H1 (cell line): ENCODE measurements at regions of chr15 and their contacts with region 1.

Region 1: GRCh38 chr15:62584301-62585235 is 419.5 kb upstream of the C2CD4B start:
- DNase-seq: no peak
- H3K4me3 ChIP-seq: peak overlapping the region in 1 of 4 experiments; percentile 6; a peak in 1 of 8 replicates
- H3K27ac ChIP-seq: no peak overlapping the region
- H3K4me1 ChIP-seq: peaks cover 0 to 9% (median 0%) of the 10 kb centered on the region in 4 experiments; a peak in 2 of 7 replicates
- H3K27me3 ChIP-seq: peaks cover 0 to 1% (median 0%) of the 10 kb centered on the region in 4 experiments; a peak in 1 of 7 replicates
- CTCF ChIP-seq: no peak
- EP300 ChIP-seq: no peak
- POLR2A ChIP-seq: no peak
- RAD21 ChIP-seq: no peak

Region 2: GRCh38 chr15:62569460-62570412 is 14.8 kb before region 1 on chr15:
- CTCF ChIA-PET with region 1: interaction called, 25 read pairs
- POLR2A ChIA-PET with region 1: interaction called, 4 read pairs
- DNase-seq: no peak
- H3K4me3 ChIP-seq: no peak overlapping the region
- H3K27ac ChIP-seq: no peak overlapping the region
- H3K4me1 ChIP-seq: peaks cover 0 to 3% (median 1%) of the 10 kb centered on the region in 4 experiments; a peak in 2 of 7 replicates
- H3K27me3 ChIP-seq: no peaks in the 10 kb centered on the region; a peak in 1 of 7 replicates
- CTCF ChIP-seq: no peak
- EP300 ChIP-seq: no peak
- POLR2A ChIP-seq: no peak
- RAD21 ChIP-seq: no peak

Region 3: DNA sequence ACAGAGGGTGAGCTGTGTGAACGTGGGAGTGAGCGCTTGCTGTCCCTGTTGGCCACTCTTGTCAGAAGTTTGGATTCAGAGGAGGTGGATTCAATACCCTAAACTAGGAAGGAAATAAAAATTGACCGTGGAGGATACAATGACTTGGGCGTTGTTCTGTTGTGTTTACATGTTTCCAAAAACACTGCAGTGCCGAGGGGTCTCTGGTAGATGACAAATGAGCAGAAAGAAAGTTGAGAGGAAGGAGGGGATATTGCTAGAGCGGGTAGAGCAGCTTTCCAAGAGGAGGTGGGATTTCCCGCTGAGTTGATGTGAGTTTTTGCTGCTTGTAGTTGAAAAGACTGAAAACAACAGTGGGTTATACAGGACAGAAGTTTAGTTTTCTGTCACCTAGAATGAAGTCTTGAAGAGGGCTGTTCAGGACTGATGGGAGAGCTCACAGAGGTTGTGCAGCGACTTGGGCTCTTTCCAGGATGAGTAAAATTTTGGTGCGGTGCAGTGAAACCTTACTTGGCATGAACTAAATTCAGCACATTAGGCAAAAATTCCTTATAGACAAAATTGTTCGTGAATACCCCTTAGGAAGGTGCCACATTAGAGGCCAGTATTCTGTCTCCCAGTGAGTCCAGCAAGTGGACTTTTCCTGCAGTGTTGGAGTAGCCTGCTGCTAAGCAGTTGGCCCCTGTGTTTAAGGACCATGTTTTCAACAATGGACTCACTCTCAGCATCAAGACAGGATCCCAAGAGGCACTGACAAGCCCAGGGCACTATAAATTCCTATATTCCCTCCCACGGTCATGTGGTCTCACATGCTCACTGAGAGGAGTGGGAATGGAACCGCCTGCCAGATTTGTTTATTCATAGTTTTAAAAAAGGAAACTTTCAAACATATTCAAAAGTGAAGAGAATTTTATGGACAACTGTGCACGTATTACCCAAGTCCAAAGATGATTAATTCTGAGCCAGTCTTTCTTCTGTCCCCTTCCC is 15.5 kb after region 1 on chr15:
- CTCF ChIA-PET with region 1: no interaction called
- POLR2A ChIA-PET with region 1: no interaction called
- DNase-seq: no peak
- H3K4me3 ChIP-seq: no peak overlapping the region
- H3K27ac ChIP-seq: no peak overlapping the region
- H3K4me1 ChIP-seq: peaks cover 2 to 5% (median 3%) of the 10 kb centered on the region in 4 experiments; a peak in 2 of 7 replicates
- H3K27me3 ChIP-seq: no peaks in the 10 kb centered on the region
- CTCF ChIP-seq: no peak
- EP300 ChIP-seq: no peak
- POLR2A ChIP-seq: no peak
- RAD21 ChIP-seq: no peak

Region 4: GRCh38 chr15:62684123-62684808 is 99.7 kb after region 1 on chr15:
- CTCF ChIA-PET with region 1: no interaction called
- POLR2A ChIA-PET with region 1: no interaction called
- DNase-seq: no peak
- H3K4me3 ChIP-seq: no peak overlapping the region
- H3K27ac ChIP-seq: no peak overlapping the region
- H3K4me1 ChIP-seq: no peaks in the 10 kb centered on the region
- H3K27me3 ChIP-seq: no peaks in the 10 kb centered on the region
- CTCF ChIP-seq: no peak
- EP300 ChIP-seq: no peak
- POLR2A ChIP-seq: no peak
- RAD21 ChIP-seq: no peak